Aorta (tissue), 5 donors: ENCODE measurements at regions of chr7 and their contacts with region 1.

Region 1: GRCh38 chr7:130668257-130669084 is at the start of gene COPG2:
- DNase-seq: peak; percentile 88 to 95
- ATAC-seq: peak; percentile 98
- H3K4me3 ChIP-seq: peak within 1 kb of the TSS; percentile 62 to 81
- H3K27ac ChIP-seq: peak within 1 kb of the TSS in 1 of 2 donors; percentile 15
- H3K4me1 ChIP-seq: peaks cover 0 to 2% of the 10 kb centered on the region in 2 donors
- H3K27me3 ChIP-seq: no peaks in the 10 kb centered on the region
- total RNA-seq, gene COPG2: 9.7 to 13.2 TPM

Region 2: DNA sequence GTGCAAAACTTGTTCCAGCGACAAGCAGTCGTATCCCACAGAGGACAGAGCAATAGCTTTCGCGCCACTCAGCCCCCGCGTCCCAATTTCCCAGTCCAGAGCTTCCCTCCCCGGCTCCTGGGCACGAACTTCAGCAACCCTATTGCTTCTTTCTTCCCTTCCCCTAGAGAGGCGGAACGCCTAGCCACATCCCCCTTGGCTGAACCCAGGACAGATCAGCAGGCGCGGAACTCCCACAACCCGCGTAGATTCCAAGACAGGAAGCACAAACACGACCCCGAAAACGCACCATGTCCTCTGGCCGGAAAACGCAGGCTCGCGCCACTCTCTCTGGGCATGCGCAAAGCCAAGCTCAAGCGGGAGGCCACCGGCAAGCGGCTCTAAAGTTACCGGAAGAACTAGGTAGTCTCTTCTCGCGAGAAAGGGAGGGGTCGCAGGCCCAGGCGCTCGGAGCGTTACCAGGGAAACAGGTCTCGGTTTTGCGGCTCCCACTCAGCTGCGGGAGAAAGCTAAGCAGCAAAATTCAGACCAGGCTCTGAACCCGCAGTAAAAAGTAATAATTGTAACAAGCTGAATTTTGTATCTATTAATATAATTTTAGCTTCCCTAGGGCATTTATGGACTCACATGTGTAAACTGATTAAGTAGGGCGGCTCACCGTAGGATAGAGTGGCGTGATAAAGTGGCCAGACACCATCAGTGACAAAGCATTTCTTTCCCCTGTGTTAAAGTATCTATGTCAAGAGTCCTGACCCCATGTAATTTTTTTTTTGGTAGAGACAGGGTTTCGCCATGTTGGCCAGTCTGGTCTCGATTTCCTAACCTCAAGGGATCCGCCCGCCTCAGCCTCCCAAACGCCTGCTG is 463.2 kb before region 1 on chr7 and contains the start of gene TMEM209:
- intact Hi-C with region 1: loop called in 1 of 2 experiments (anchors 10 kb)
- DNase-seq: peak; percentile 97
- ATAC-seq: peak; percentile 99
- H3K4me3 ChIP-seq: peak within 1 kb of the TSS; percentile 84 to 97
- H3K27ac ChIP-seq: peak within 1 kb of the TSS in 1 of 2 donors; percentile 90
- H3K4me1 ChIP-seq: no peaks in the 10 kb centered on the region
- H3K27me3 ChIP-seq: no peaks in the 10 kb centered on the region
- total RNA-seq, gene TMEM209: 11.7 to 13.7 TPM